Right ventricle myocardium superior (tissue), 1 donor: ENCODE measurements at regions of chr19 and their contacts with region 1.

Region 1: GRCh38 chr19:53792721-53793433 is 31.2 kb downstream of the NLRP12 start:
- DNase-seq: peak; percentile 88
- ATAC-seq: peak; percentile 98

Region 2: GRCh38 chr19:54023191-54023590 is 230.3 kb after region 1 on chr19:
- intact Hi-C with region 1: loop called (anchors 5 kb)
- DNase-seq: no peak
- ATAC-seq: no peak